MCF 10A (cell line): ENCODE measurements at regions of chr3 and their contacts with region 1.

Region 1: DNA sequence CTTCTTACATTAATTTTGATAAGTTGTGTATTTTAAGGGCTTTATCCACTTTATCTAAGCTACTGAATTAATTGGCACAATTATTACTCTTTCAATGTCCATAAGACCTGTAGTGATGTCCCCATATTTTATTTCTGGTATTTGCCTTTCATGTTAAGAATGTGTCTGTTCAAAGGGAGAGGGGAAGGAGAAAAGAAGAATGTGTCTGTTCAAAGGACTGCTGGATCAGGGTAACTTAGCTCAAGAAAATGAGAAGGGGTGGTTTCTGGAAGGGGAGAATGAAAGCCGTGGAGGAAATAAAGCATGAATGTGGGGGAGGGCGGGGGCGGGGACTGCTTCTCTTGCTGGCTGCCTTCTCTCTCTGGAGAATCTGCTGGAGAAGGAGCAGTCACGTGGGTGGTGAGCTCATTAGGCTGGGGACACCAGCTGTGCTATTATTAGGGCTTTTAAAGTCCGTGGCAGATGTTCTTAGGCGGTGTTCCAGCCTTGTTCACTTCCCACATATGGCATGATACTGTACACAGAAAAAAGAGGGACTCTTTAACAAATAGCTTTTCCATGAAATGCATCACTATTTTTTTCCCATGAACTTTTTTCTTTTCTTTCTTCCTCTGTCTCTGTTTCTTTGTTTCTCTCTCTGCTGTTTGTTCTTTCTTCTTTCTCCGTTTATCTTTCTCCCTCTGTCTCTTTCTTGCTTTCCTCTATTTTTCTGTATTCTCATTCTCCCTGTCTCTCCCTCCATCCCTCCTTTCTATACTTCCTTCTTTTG is 63.7 kb upstream of the ULK4 start:
- DNase-seq: peak; percentile 72
- H3K4me3 Mint-ChIP-seq: peak overlapping the region; percentile 17
- H3K27ac Mint-ChIP-seq: peak overlapping the region; percentile 66
- H3K4me1 Mint-ChIP-seq: peaks cover 50% of the 10 kb centered on the region
- H3K27me3 Mint-ChIP-seq: no peaks in the 10 kb centered on the region
- CTCF ChIP-seq: no peak

Region 2: GRCh38 chr3:41961750-41962679 is 63.5 kb before region 1 on chr3 and contains the start of gene ULK4:
- CTCF ChIA-PET with region 1: no interaction called
- POLR2A ChIA-PET with region 1: interaction called, 15 read pairs
- intact Hi-C with region 1: no loop called
- DNase-seq: peak; percentile 99
- H3K4me3 Mint-ChIP-seq: peak within 1 kb of the TSS; percentile 81
- H3K27ac Mint-ChIP-seq: peak within 1 kb of the TSS; percentile 89
- H3K4me1 Mint-ChIP-seq: peaks cover 6% of the 10 kb centered on the region
- H3K27me3 Mint-ChIP-seq: no peaks in the 10 kb centered on the region
- CTCF ChIP-seq: no peak
- total RNA-seq, gene ULK4: 6.9 and 7.8 TPM in 2 replicates

Region 3: DNA sequence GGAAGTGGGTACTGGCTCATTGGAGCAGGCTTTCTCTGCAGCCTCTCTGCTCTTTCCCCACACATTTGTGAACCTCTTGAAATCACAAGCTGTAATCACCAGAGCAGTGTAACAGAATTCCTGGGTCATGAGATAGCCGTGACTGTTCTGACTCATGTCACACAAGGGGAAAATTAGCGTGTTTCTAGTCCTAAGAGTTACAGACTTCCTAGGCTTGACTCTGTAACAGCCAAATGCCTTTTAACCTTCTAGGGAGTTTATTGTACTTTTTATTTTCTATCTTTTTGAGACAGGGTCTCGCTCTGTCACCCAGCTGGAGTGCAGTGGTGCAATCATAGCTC is 10.9 kb after region 1 on chr3:
- CTCF ChIA-PET with region 1: interaction called, 5 read pairs
- POLR2A ChIA-PET with region 1: interaction called, 33 read pairs
- intact Hi-C with region 1: no loop called
- DNase-seq: peak; percentile 70
- H3K4me3 Mint-ChIP-seq: no peak overlapping the region
- H3K27ac Mint-ChIP-seq: peak overlapping the region; percentile 70
- H3K4me1 Mint-ChIP-seq: peaks cover 63% of the 10 kb centered on the region
- H3K27me3 Mint-ChIP-seq: no peaks in the 10 kb centered on the region
- CTCF ChIP-seq: no peak

Region 4: GRCh38 chr3:42061713-42062408 is 36.3 kb after region 1 on chr3:
- CTCF ChIA-PET with region 1: interaction called, 3 read pairs
- POLR2A ChIA-PET with region 1: interaction called, 13 read pairs
- intact Hi-C with region 1: no loop called
- DNase-seq: peak; percentile 90
- H3K4me3 Mint-ChIP-seq: peak overlapping the region; percentile 58
- H3K27ac Mint-ChIP-seq: peak overlapping the region; percentile 97
- H3K4me1 Mint-ChIP-seq: peaks cover 34% of the 10 kb centered on the region
- H3K27me3 Mint-ChIP-seq: no peaks in the 10 kb centered on the region
- CTCF ChIP-seq: no peak

Region 5: GRCh38 chr3:42080452-42080891 is 54.9 kb after region 1 on chr3:
- CTCF ChIA-PET with region 1: interaction called, 5 read pairs
- POLR2A ChIA-PET with region 1: interaction called, 23 read pairs
- intact Hi-C with region 1: no loop called
- DNase-seq: peak; percentile 84
- H3K4me3 Mint-ChIP-seq: peak overlapping the region; percentile 37
- H3K27ac Mint-ChIP-seq: peak overlapping the region; percentile 97
- H3K4me1 Mint-ChIP-seq: peaks cover 28% of the 10 kb centered on the region
- H3K27me3 Mint-ChIP-seq: no peaks in the 10 kb centered on the region
- CTCF ChIP-seq: no peak